ENCODE measurements at regions of chr22 and their contacts with region 1.

Region 1: DNA sequence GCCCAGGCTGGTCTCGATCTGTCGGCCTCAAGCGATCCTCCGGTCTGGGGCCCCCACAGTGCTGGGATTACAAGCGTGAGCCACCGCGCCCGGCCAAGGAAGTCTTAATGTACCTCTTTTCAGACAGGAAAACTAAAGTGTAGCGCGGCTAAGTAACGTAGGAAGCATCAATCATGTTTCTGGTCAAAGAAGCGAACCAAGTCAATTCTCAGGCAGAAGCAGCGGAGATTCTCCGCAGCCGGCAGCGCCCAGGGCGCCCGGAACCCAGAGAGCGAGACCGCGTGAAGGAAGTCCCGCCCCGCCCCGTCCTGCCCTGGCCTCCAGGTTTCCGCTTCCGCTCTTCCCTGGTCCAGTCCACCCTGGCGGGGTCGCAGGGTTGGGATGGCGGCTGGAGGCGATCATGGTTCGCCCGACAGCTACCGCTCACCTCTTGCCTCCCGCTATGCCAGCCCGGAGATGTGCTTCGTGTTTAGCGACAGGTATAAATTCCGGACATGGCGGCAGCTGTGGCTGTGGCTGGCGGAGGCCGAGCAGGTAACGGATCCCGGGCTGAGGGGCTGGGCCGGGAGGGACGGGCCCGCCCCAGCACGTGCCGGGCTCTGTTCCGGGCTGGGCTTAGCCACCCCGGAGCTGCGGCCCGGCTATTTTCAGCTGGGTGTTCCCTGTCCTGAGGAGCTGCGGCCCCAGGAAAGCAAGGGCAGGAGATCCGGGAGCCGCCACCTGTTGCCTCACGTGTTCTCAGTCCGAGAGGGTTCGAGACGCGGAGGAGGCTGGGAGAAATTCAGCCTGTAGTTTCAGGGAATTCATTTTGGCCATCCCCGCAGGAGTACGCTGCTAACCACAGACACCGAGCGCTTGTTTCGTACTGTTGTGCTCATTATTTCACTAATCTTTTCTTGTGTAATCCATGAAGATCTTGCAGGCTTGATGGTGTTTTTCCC is at the start of gene ADSL:
- DNase-seq: peak; percentile 85
- ATAC-seq: peak; percentile 91
- H3K4me3 Mint-ChIP-seq: peak within 1 kb of the TSS; percentile 98
- H3K27ac Mint-ChIP-seq: peak within 1 kb of the TSS; percentile 98
- H3K4me1 Mint-ChIP-seq: peaks cover 34% of the 10 kb centered on the region
- H3K27me3 Mint-ChIP-seq: no peaks in the 10 kb centered on the region
- CTCF ChIP-seq: no peak
- total RNA-seq, gene ADSL: 102 and 109 TPM in 2 replicates

Region 2: GRCh38 chr22:40177738-40178416 is 168.6 kb before region 1 on chr22 and contains the start of gene TNRC6B:
- CTCF ChIA-PET with region 1: no interaction called
- POLR2A ChIA-PET with region 1: interaction called, 15 read pairs
- intact Hi-C with region 1: loop called (anchors 2 kb)
- DNase-seq: peak; percentile 24
- ATAC-seq: peak; percentile 86
- H3K4me3 Mint-ChIP-seq: peak within 1 kb of the TSS; percentile 87
- H3K27ac Mint-ChIP-seq: peak within 1 kb of the TSS; percentile 87
- H3K4me1 Mint-ChIP-seq: peaks cover 60% of the 10 kb centered on the region
- H3K27me3 Mint-ChIP-seq: no peaks in the 10 kb centered on the region
- CTCF ChIP-seq: no peak
- total RNA-seq, gene TNRC6B: 84.6 and 95.2 TPM in 2 replicates

Region 3: DNA sequence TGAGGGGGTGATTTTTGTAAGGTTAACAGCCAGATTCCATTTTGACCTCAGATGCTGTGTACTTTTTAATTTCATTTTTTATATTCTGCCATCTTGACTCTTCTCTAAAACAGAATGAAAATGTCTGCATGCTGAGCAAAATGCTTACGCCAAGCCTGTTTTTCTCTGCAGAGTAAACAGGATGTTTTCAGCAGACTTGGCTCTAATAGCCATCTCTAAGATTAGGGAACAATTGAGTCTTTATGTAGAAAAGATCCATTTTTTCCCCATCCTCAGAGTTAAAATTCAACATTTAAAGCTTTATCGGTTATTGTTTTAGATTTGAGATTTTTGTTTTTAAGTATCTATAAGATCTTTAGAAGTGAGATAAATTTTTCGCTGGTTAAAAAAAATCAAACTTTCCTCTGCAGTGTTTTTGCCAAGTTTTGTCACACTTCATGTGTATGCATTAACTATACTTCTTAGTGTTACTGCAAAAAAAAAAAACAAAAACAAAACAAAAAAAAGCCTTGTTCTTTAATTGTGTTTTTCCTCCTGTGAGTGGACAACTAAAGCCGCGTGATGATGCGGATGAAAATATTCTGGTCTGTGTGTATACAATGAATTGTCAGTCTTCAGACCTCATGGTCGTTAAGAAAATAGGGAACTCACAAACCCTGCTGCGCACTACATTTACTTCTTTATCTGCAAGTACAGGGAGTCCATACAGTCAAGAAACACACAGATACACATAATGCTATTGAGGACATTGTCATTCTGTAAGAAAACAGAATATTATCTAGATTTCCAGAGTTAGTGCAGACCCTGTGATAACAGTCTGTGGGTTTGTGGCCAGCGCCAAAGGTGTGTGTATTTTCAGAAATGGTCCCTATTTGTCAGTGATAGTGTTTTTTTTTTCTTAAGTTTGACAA is 17.6 kb before region 1 on chr22:
- CTCF ChIA-PET with region 1: interaction called, 11 read pairs
- POLR2A ChIA-PET with region 1: interaction called, 4 read pairs
- intact Hi-C with region 1: no loop called
- DNase-seq: no peak
- ATAC-seq: no peak
- H3K4me3 Mint-ChIP-seq: no peak overlapping the region
- H3K27ac Mint-ChIP-seq: no peak overlapping the region
- H3K4me1 Mint-ChIP-seq: peaks cover 13% of the 10 kb centered on the region
- H3K27me3 Mint-ChIP-seq: no peaks in the 10 kb centered on the region
- CTCF ChIP-seq: no peak

Region 4: DNA sequence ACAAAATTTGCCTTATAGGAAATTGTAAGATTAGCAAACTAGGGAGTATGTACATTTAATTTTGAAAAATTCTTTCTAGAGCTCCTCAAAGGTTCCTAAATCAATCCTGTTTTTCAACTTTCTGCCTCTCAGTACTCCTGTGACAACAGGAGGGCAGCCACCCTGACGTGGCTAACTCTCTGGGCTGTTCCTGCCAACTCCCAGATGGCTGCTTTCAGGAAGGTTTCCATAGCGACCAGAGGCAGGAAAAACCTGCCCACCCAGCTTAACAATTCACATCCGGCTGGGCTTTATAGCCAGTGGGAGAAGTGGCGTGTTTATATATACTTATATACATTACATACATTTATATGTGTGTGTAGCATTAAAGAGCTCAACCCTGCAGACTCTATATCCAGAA is 50.4 kb after region 1 on chr22:
- CTCF ChIA-PET with region 1: interaction called, 4 read pairs
- POLR2A ChIA-PET with region 1: interaction called, 18 read pairs
- intact Hi-C with region 1: no loop called
- DNase-seq: no peak
- ATAC-seq: no peak
- H3K4me3 Mint-ChIP-seq: peak overlapping the region; percentile 28
- H3K27ac Mint-ChIP-seq: peak overlapping the region; percentile 80
- H3K4me1 Mint-ChIP-seq: peaks cover 86% of the 10 kb centered on the region
- H3K27me3 Mint-ChIP-seq: no peaks in the 10 kb centered on the region
- CTCF ChIP-seq: no peak

Region 5: GRCh38 chr22:40487663-40488249 is 141.3 kb after region 1 on chr22:
- CTCF ChIA-PET with region 1: interaction called, 3 read pairs
- POLR2A ChIA-PET with region 1: interaction called, 3 read pairs
- intact Hi-C with region 1: loop called (anchors 1 kb)
- DNase-seq: no peak
- ATAC-seq: no peak
- H3K4me3 Mint-ChIP-seq: no peak overlapping the region
- H3K27ac Mint-ChIP-seq: peak overlapping the region; percentile 5
- H3K4me1 Mint-ChIP-seq: peaks cover 35% of the 10 kb centered on the region
- H3K27me3 Mint-ChIP-seq: no peaks in the 10 kb centered on the region
- CTCF ChIP-seq: peak; percentile 53

Region 6: DNA sequence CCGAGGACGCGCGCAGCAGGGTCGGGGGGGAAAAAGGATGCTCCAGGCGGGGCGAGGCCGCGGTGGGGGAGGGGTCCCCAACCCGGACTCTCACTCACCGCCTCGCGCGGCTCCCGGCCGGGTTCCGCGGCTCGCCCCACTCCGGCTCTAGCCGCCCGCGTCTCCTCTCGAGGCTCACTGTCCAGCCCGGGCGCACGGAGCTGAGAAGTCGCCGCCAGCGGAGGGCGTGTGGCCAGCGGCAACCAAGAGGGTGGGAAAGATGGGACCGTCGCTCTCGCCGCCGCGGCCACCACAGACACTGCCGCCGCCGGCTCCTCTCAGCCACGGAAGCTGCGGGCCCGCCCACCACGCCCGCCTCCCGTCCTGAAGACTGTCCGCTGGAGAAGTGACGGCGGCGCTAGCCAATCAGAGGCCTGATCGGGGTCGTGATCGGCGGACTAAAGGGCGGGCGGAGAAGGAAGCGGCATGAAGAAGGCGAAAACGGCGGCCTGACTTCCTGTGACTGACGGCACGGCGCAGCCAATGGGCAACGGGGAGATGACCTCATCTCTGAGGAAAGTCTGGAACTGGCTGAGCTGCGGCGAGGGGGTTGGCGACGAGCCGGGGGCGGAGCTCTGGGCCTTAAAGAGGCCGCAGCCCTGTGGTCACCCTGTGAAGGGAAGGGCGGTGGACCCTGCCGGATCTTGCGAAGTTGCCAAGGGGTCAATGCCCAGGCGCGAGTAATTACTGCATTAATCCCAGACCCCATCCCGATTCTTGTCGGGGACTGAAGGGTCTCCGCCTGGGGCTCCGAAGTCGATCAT is 290.1 kb after region 1 on chr22 and contains the start of gene MRTFA:
- CTCF ChIA-PET with region 1: no interaction called
- POLR2A ChIA-PET with region 1: no interaction called
- intact Hi-C with region 1: loop called (anchors 1 kb)
- DNase-seq: peak; percentile 95
- ATAC-seq: peak; percentile 93
- H3K4me3 Mint-ChIP-seq: peak within 1 kb of the TSS; percentile 98
- H3K27ac Mint-ChIP-seq: peak within 1 kb of the TSS; percentile 95
- H3K4me1 Mint-ChIP-seq: peaks cover 45% of the 10 kb centered on the region
- H3K27me3 Mint-ChIP-seq: no peaks in the 10 kb centered on the region
- CTCF ChIP-seq: no peak
- total RNA-seq, gene MRTFA: 99.4 and 115 TPM in 2 replicates